Heart right ventricle (tissue), 16 donors: ENCODE measurements at regions of chr6 and their contacts with region 1.

Region 1: DNA sequence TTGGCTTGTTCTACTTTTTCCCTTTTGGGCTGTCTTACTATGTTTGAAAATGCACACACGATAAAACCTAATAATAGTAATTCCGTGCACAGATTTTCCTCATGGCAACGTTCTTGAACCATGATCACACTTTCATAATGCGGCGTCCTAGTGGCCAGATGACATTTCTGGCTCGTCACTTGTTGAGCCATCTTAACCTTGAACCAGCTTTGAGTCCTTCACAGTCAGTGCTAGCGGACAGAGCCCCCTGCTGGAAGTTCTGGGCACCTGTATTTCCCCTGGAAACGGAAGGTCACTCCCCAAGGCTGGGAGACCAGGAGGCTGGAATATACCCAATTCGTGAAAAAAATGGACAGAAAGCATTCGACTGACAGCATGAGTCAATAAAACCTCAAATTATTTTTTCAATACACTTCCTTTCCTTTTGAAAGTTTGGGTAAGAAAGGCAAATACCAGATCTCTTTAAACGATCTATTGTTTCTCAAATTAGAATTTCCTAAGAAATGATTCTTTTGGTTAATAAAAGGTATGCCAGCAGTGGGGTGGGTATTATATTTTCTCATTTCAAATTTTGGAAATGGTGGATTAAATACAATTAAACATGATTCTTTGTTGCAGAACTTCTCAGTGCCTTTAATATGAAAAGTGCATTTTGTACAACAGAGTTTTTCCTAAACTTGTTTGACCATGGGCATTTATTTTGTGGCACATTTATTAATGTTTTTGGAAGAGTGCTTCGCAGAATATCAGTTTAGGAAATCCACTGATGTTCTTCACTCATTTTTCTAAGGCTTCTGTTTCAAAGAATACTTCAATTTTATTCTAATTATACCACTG is 542.3 kb downstream of the QKI start:
- DNase-seq: peak; percentile 79 to 90
- ATAC-seq: peak; percentile 82 to 93 (median 91)
- H3K4me3 ChIP-seq: peak overlapping the region in 1 of 10 donors; percentile 2
- H3K27ac ChIP-seq: peak overlapping the region in 7 of 10 donors; percentile 7 to 94 (median 56)
- H3K4me1 ChIP-seq: peaks cover 0 to 51% (median 27%) of the 10 kb centered on the region in 9 donors
- H3K27me3 ChIP-seq: peaks cover 0 to 4% (median 0%) of the 10 kb centered on the region in 7 donors
- CTCF ChIP-seq: peak; percentile 90 to 98 (median 95)

Region 2: GRCh38 chr6:163338671-163339405 is 618.0 kb before region 1 on chr6:
- intact Hi-C with region 1: loop called in 2 of 10 experiments (anchors 10 kb)
- DNase-seq: peak in 1 of 2 donors; percentile 72
- ATAC-seq: peak; percentile 40 to 77 (median 64)
- H3K4me3 ChIP-seq: peak overlapping the region in 1 of 10 donors; percentile 5
- H3K27ac ChIP-seq: peak overlapping the region; percentile 71 to 98 (median 86)
- H3K4me1 ChIP-seq: peaks cover 28 to 88% (median 58%) of the 10 kb centered on the region in 9 donors
- H3K27me3 ChIP-seq: no peaks in the 10 kb centered on the region
- CTCF ChIP-seq: no peak

Region 3: GRCh38 chr6:163413345-163414116 is 543.3 kb before region 1 on chr6:
- intact Hi-C with region 1: loop called in 7 of 10 experiments (anchors 2 to 5 kb)
- DNase-seq: peak; percentile 90 to 91
- ATAC-seq: peak; percentile 87 to 96 (median 90)
- H3K4me3 ChIP-seq: peak overlapping the region; percentile 48 to 85 (median 74)
- H3K27ac ChIP-seq: peak overlapping the region; percentile 95 to 100 (median 100)
- H3K4me1 ChIP-seq: peaks cover 0 to 28% (median 13%) of the 10 kb centered on the region in 9 donors
- H3K27me3 ChIP-seq: no peaks in the 10 kb centered on the region
- CTCF ChIP-seq: peak in 2 of 9 donors; percentile 6 to 8

Region 4: DNA sequence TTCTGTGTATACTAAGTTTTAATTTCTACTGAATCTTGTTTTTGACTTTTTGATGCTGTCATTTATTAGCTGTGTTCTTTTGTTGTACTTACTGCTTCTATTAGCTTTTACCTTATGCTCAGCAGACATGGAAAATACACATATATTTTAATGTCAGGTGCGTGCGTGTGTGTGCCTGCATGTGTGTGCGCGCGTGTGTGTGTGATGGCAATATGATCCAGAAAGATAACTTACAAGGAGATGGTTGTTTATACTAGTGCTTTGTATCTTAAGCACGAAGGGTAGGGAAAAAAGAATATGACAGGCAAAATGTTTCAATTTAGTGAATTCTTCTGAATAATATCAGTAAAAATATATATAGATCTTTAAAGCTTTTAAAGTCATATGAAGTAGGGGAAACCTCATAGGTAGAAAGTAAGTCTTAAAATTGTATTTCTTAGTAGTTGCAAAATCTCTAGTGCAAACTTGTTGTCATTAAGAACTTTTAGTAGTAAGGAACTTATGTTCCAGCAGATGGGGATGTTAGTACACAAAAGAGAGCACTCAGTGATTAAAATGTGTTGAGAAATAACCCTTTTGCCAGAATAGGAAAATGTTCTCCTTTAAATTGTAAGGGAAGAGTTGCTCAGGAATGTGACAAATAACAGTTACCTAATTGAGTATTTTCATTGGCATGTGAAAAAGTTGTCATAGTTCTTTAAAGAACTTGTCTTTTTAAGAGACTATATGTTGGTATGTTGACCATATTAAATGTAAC is 529.1 kb before region 1 on chr6:
- intact Hi-C with region 1: loop called in 3 of 10 experiments (anchors 5 to 10 kb)
- DNase-seq: no peak
- ATAC-seq: peak in 5 of 8 donors; percentile 38 to 54 (median 41)
- H3K4me3 ChIP-seq: peak overlapping the region in 2 of 10 donors; percentile 9 to 12
- H3K27ac ChIP-seq: peak overlapping the region in 5 of 10 donors; percentile 1 to 36 (median 8)
- H3K4me1 ChIP-seq: peaks cover 3 to 100% (median 99%) of the 10 kb centered on the region in 9 donors
- H3K27me3 ChIP-seq: no peaks in the 10 kb centered on the region
- CTCF ChIP-seq: peak; percentile 9 to 65 (median 44)

Region 5: DNA sequence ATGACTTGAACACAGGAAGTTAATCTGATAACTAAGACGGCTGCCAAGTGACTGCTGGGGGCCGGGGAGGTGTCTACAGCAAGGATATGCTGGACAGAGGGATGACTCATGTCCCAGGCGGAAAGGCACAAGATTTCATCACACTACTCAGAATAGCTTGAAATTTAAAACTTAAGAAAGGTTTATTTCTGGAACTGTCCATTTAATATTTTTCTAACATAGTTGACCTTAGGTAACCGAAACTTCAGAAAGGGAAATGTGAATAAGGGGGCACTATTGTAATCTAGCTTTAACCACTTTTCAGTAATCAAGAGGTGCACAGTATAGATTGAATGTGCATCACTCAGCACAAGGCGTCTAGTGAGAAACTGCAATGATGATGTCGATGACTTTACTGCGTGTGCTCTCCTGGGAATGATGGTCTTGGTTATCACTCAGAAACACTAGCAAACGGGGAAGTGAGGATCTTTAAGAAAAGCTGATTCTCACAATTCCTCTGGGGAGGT is 370.8 kb before region 1 on chr6:
- intact Hi-C with region 1: loop called in 7 of 10 experiments (anchors 5 to 10 kb)
- DNase-seq: peak; percentile 49 to 68
- ATAC-seq: peak; percentile 65 to 90 (median 79)
- H3K4me3 ChIP-seq: peak overlapping the region in 2 of 10 donors; percentile 1 to 8
- H3K27ac ChIP-seq: peak overlapping the region in 8 of 10 donors; percentile 27 to 63 (median 47)
- H3K4me1 ChIP-seq: peaks cover 4 to 58% (median 28%) of the 10 kb centered on the region in 9 donors
- H3K27me3 ChIP-seq: no peaks in the 10 kb centered on the region
- CTCF ChIP-seq: no peak

Region 6: GRCh38 chr6:163745536-163746400 is 211.0 kb before region 1 on chr6:
- intact Hi-C with region 1: loop called in 3 of 10 experiments (anchors 5 to 10 kb)
- DNase-seq: peak; percentile 52 to 71
- ATAC-seq: peak; percentile 83 to 95 (median 92)
- H3K4me3 ChIP-seq: no peak overlapping the region
- H3K27ac ChIP-seq: peak overlapping the region; percentile 36 to 87 (median 65)
- H3K4me1 ChIP-seq: peaks cover 8 to 59% (median 25%) of the 10 kb centered on the region in 9 donors
- H3K27me3 ChIP-seq: no peaks in the 10 kb centered on the region
- CTCF ChIP-seq: no peak